ENCODE measurements at regions of chr13 and their contacts with region 1.

Region 1: DNA sequence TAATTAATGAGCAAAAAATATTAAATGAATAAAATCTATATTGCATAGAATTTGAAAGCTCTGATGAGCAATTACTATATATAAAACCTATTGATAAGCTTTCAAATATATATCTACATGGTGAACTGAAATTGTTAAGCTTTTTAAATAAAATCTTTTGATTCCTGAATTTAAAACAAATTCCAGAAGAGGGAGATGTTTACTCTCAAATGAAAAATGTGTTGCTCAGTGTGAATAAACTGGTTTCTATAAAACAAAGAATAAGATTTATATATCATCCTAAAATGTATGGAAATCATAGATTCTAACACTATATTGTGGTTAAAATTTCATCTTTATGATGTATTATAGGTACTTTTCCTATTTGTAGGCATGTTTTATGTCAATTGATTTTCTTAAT is 171.5 kb upstream of the SLITRK6 start:
- DNase-seq: no peak
- H3K4me3 ChIP-seq: no peak overlapping the region
- H3K4me3 Mint-ChIP-seq: no peak overlapping the region
- H3K27ac Mint-ChIP-seq: no peak overlapping the region
- H3K4me1 ChIP-seq: no peaks in the 10 kb centered on the region
- H3K4me1 Mint-ChIP-seq: no peaks in the 10 kb centered on the region
- H3K27me3 ChIP-seq: no peaks in the 10 kb centered on the region
- H3K27me3 Mint-ChIP-seq: peaks cover 4% of the 10 kb centered on the region
- CTCF ChIP-seq: no peak

Region 2: GRCh38 chr13:86446311-86446710 is 475.6 kb after region 1 on chr13:
- CTCF ChIA-PET with region 1: no interaction called
- POLR2A ChIA-PET with region 1: no interaction called
- intact Hi-C with region 1: loop called (anchors 5 kb)
- DNase-seq: no peak
- H3K4me3 ChIP-seq: no peak overlapping the region
- H3K4me3 Mint-ChIP-seq: no peak overlapping the region
- H3K27ac Mint-ChIP-seq: no peak overlapping the region
- H3K4me1 ChIP-seq: no peaks in the 10 kb centered on the region
- H3K4me1 Mint-ChIP-seq: no peaks in the 10 kb centered on the region
- H3K27me3 ChIP-seq: no peaks in the 10 kb centered on the region
- H3K27me3 Mint-ChIP-seq: no peaks in the 10 kb centered on the region
- CTCF ChIP-seq: no peak

Measured in Caco-2 (cell line).